Right ventricle myocardium superior (tissue), 1 donor: ENCODE measurements at regions of chr6 and their contacts with region 1.

Region 1: DNA sequence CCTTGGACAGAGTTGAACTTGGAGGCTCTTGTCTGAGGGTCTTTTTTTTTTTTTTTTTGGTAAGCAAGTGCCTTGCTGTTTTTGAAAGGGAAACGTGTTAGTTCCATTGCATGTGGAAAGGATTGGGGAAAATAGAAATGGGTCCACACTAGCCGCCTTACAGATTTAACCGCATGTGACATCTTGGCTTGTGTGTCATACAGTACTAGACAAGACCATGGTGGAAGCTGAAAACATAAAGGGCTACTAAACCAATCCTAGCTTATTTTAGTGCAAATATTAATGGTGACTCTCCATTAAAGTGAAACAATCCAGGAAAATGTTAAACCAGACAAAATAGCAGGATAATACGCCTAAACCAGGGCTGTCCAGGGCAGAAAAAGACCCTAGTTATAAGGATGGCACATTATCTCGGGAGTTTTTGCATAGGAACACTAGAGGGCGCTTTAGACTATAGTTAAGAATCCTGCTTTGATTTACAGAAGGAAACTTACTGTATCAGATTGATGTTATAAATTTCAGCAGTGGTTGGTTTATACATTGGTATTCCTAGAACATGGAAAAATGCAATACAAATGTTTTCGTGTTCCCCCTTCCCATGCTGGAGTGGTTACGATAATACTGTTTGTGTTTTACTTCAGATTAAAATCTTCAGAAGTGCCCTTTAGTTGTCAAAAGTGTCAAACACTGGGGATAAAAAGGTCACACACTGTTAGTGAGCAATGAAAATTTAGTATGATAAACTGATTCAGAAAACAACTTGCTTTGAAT is 59.8 kb upstream of the DEK start:
- DNase-seq: no peak
- ATAC-seq: peak; percentile 71

Region 2: DNA sequence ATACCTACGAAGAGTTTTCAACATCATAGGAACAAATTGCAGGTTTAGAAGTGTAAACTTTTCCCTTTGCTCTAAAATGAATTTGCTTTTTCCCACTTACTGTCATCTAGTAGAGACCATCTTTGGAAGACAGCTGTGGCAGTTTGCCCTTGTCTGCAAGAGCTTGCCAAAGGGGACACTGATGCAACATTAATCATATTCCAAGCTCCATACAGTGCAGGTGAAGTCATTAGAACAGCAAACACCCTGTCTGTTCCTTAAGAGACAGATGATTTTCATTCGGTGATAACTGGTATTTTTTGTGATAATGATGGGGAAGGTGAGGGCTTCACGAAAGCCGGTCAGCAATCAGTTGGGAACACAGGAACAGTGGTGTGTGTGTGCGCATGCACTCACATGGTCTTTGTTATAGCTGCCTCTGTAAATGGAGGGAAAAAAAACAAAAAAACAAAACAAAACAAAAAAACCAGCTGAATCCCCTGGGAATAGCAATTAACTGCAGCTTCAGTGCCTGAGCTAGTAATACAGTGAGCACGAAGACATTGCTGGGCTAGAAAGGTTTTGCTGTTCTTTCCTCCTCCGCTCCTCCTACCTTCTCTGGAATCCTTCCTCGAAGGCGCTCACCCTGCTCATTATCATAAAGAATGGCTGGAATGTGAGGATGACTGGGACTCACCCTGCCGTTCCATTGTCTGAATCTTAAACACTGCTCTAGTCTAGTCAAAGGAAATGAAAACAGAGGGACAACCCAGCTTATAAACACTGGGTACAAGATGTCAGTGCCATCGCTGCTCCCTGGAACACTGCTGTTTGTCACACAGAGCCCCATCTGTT is 301.5 kb before region 1 on chr6:
- intact Hi-C with region 1: no loop called
- DNase-seq: no peak
- ATAC-seq: no peak

Region 3: DNA sequence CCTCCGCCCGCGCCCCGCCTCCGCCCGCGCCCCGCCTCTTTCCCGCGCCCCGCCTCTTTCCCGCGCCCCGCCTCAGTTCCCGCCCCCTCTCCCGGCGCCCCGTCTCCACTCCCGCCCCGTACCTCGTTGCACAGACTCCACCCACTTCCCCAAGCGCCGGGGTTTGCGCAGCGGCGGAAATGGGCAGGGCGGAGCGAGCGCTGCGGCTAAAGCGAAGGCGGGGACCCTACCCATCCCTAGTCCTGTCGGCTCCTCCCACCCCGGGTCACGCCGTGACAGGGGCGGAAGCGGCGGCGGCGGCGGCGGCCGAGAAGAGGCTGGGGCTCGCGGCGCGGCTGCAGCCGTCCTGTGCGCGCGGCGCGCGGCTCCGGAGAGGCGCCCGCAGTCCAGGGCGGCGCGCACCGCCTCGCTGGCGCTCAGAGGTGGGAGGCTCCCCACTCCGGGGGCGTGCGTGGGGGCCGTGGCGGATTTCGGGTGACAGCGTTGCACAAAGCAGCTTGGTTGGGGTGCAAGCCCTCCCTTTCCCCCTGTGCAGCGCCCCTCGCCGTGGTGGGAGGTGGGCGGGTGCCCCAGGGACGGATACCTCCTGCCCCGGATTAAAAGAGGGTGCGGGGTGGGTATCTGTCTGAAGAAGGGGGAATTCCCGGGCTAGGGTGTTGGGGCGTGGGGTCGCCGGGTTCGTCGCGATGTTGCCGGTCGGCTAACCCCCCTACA is 168.8 kb before region 1 on chr6 and contains the start of gene KDM1B:
- intact Hi-C with region 1: no loop called
- DNase-seq: peak; percentile 99
- ATAC-seq: peak; percentile 98
- total RNA-seq, gene KDM1B: 13.2 TPM

Region 4: DNA sequence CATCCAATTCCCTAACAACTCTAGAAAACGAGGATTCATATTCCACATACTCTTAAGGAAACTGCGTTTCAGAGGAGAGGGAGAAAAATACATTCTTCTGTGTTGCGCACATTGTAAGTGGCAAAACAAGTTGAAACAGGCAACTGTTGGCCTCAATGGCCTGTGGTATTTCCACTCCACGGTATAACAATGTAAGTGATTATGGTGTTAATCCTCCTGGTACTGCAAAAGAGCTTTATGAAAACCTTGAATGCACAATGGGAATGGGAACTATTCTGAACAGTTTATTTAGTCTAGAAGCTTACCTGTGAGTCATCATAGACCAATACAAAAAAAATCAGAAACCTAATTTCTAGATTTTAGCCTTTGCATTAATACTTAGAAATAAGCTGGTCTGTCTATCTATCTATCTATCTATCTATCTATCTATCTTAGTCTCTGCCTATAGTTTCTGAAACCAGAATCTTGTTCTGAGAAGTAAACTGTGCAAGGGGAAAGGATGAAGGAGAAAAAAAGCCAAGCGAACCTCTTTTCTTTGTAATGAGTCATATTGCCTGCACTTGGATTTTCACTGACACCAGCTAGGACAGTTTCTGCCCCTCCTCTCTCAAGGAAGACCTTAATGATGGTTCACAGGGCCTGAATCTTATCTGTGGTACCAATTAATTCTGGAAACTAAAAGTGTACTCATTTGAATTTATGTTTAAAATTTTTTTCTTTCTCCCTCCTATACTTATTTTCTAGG is 164.6 kb after region 1 on chr6:
- intact Hi-C with region 1: loop called (anchors 5 kb)
- DNase-seq: no peak
- ATAC-seq: no peak

Region 5: DNA sequence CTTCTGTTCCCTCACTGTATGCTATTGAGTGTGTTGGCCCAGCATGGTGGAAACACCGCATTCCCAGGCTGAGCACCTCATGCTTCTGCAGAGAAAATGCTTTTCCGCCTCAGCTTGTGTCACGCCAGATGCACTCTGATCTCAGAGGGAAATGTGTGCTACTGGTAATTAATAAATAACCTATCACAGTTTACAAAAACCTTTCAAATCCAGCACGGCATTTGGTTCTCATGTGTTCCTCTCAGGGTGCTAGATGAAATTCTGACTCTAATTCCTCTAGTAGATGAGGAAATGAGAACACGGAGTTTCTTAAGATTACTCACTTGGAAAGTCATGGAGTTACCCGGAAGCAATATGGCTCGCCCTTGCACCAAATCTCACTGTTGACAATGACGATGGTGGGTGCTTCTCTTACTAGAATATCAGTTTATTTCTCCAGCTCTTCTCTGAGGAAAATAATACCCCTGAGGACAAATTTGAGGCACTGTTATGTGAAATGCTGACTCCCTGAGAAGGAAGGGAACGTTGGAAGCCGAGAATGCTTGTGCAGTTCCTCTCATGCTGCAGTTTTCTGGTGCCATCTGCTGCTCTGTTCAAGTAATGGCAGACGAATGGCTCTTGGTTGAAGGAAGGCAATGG is 179.6 kb after region 1 on chr6:
- intact Hi-C with region 1: loop called (anchors 1 kb)
- DNase-seq: no peak
- ATAC-seq: peak; percentile 92